Activated T-helper 2 cell treated with anti-CD3 and anti-CD28 coated beads, Interferon-gamma antibody, Interleukin-2, Interleukin-4, amounts not matched to agents 10 μg/mL and 5 μg/mL and 100 μg/mL, durations not matched to agents 14 hours and 24 hours and 36 hours (primary cell): ENCODE measurements at regions of chr3 and their contacts with region 1.

Region 1: GRCh38 chr3:101195951-101196713 is 124.2 kb downstream of the IMPG2 start:
- DNase-seq: no peak
- H3K4me3 Mint-ChIP-seq: no peak overlapping the region
- H3K27ac Mint-ChIP-seq: no peak overlapping the region
- H3K4me1 Mint-ChIP-seq: peaks cover 2% of the 10 kb centered on the region
- H3K27me3 Mint-ChIP-seq: peaks cover 2% of the 10 kb centered on the region

Region 2: DNA sequence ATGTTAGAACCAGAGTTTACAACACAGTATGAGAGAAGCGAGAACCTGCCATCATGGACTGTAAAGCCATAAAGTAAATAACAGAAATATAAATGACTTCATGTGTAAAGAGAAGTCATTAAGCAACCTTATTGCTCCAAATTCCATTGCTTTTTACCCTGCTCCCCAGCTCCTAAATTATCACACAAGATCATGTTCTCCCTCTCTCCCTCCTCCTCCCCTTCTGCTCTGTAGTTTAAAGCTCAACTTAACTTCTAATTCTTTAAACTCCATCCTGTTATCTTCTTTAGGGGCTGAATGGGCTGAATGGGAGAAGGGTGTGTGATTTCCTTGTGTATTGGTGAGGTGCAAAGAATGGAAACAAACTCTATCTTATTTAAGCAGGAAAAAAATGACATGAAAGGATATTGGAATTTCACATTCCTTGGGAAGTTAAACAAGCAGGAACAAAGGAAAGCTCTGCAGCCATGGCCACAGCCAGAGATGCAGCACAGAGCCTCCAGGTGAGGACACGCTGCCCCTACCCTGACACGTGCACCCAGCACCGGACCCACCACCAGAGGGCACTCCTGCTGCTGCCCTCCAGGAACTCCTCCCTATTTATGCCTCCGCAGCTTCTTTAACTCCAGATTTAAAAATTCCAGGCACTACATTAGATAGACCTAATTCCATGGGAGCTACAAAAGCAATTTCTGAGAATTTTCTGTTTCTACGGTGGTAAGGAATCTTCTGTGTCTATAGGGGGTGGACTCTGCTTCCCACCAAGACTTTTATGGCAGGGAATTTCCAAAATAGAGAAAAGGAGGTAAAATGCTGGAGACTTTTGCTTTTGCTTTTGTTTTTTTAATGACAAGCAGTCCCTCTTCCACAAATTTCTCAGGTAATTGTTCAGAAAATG is 126.0 kb before region 1 on chr3:
- intact Hi-C with region 1: loop called (anchors 1 kb)
- DNase-seq: peak; percentile 30
- H3K4me3 Mint-ChIP-seq: no peak overlapping the region
- H3K27ac Mint-ChIP-seq: no peak overlapping the region
- H3K4me1 Mint-ChIP-seq: peaks cover 6% of the 10 kb centered on the region
- H3K27me3 Mint-ChIP-seq: peaks cover 12% of the 10 kb centered on the region

Region 3: DNA sequence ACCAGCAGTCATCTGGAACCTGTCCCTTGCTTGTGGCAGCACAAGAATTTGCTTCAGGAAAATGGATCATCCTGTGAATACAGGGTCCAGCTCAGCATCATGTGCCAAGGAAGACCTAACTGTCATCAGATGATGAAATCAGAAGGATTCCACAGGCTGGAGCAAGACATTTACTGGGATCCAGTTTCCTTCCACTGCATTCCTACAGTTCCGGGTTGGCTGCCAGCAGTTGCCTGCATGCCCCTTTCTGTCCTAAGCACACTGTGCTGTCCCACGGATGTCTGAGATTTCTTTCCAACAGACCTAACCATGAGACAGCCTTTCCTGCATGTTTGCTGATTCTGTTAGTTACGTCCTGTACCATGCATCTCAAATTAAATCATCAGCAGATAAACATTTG is 16.5 kb before region 1 on chr3:
- intact Hi-C with region 1: no loop called
- DNase-seq: no peak
- H3K4me3 Mint-ChIP-seq: no peak overlapping the region
- H3K27ac Mint-ChIP-seq: no peak overlapping the region
- H3K4me1 Mint-ChIP-seq: peaks cover 1% of the 10 kb centered on the region
- H3K27me3 Mint-ChIP-seq: no peaks in the 10 kb centered on the region

Region 4: DNA sequence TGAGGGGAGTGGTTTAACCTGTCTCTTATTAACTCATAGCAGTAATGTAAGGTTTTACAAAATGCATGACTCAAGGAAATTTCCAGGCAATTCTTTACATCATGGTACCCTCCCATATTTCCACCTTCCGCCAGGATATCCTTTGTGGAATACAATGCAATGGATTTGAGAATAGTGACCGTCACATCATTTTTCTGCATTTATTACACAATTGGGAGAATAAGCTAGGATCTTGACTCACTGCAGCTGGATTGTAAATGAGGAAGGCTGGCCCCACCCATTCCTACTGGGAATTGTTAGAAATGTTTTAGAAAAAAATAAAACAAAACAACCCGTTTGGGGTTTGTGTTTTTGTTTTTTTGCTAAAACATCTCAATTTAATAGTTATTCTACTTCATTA is 26.9 kb after region 1 on chr3:
- intact Hi-C with region 1: no loop called
- DNase-seq: no peak
- H3K4me3 Mint-ChIP-seq: no peak overlapping the region
- H3K27ac Mint-ChIP-seq: no peak overlapping the region
- H3K4me1 Mint-ChIP-seq: peaks cover 3% of the 10 kb centered on the region
- H3K27me3 Mint-ChIP-seq: no peaks in the 10 kb centered on the region